Posterior vena cava (tissue), 2 donors: ENCODE measurements at regions of chr3 and their contacts with region 1.

Region 1: GRCh38 chr3:172294223-172294806 is 153.9 kb downstream of the GHSR start:
- DNase-seq: no peak

Region 2: DNA sequence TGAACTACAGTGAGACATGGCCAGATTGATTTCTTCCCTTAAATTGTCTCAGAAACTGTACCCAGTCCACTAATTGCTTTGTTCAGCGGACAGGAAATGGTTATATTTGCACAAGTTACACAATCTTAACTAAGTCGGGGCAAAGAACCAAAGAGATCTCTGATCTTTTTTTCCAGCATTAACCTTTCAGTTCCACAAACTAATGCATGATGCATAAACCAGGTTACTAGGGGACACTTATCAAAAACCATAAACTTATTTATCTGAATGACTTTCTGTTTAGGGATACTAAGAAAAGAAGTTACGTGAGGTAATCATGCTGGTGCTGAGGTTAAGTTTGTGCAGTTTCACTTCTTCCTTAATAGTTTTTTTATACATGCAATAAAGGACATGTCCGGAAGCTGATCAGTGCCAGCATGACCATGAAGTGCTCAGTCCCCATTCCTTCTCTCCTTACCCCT is 232.6 kb before region 1 on chr3:
- intact Hi-C with region 1: loop called in 1 of 2 experiments (anchors 10 kb)
- DNase-seq: no peak